Calu3 (cell line): ENCODE measurements at regions of chrX and their contacts with region 1.

Region 1: GRCh38 chrX:19739683-19740082 is 147.7 kb downstream of the SH3KBP1 start:
- DNase-seq: peak; percentile 76
- H3K4me3 Mint-ChIP-seq: no peak overlapping the region
- H3K27ac Mint-ChIP-seq: no peak overlapping the region
- H3K4me1 Mint-ChIP-seq: peaks cover 29% of the 10 kb centered on the region
- H3K27me3 Mint-ChIP-seq: no peaks in the 10 kb centered on the region
- CTCF ChIP-seq: peak; percentile 65

Region 2: GRCh38 chrX:19593690-19594089 is 146.0 kb before region 1 on chrX:
- CTCF ChIA-PET with region 1: no interaction called
- intact Hi-C with region 1: loop called (anchors 10 kb)
- DNase-seq: peak; percentile 29
- H3K4me3 Mint-ChIP-seq: no peak overlapping the region
- H3K27ac Mint-ChIP-seq: no peak overlapping the region
- H3K4me1 Mint-ChIP-seq: no peaks in the 10 kb centered on the region
- H3K27me3 Mint-ChIP-seq: no peaks in the 10 kb centered on the region
- CTCF ChIP-seq: no peak